Motor neuron (in vitro differentiated cells): ENCODE measurements at regions of chr2 and their contacts with region 1.

Region 1: DNA sequence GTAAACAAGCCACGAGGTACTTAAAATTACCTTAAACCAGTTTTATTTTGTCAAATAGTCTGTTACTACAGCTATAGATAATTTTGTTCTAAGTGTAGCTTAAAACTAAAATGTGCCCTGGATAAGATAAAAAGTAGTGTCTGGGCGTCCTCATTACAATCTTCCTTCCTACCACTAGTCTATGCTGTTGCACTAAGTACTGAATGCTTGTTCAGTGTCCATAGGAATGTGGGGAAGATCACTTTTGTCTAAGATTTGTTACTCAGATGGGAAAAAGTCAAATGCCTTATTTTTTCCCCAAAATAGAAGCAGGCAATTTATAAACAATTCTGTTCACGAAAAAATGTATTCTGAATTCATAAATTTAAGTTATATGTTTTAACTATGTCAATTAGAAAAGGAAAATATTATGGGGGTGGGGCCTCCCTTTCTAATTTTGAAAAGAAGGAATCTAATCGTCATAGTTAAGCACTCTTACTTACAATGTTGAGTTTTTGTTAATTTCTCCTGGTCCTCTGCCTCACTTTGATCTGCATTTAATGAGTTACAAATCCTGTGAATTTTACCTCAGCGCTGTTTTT is 140.4 kb upstream of the VRK2 start:
- ATAC-seq: peak in 7 of 8 experiments; percentile 53 to 97 (median 82)
- H3K4me3 ChIP-seq: no peak overlapping the region
- H3K27ac ChIP-seq: no peak overlapping the region
- H3K4me1 ChIP-seq: no peaks in the 10 kb centered on the region

Region 2: GRCh38 chr2:58448065-58448507 is 541.8 kb after region 1 on chr2:
- in situ Hi-C with region 1: loop called in 2 of 9 experiments (anchors 10 to 25 kb)
- ATAC-seq: peak; percentile 47 to 93 (median 82)
- H3K4me3 ChIP-seq: no peak overlapping the region
- H3K27ac ChIP-seq: no peak overlapping the region
- H3K4me1 ChIP-seq: no peaks in the 10 kb centered on the region

Region 3: DNA sequence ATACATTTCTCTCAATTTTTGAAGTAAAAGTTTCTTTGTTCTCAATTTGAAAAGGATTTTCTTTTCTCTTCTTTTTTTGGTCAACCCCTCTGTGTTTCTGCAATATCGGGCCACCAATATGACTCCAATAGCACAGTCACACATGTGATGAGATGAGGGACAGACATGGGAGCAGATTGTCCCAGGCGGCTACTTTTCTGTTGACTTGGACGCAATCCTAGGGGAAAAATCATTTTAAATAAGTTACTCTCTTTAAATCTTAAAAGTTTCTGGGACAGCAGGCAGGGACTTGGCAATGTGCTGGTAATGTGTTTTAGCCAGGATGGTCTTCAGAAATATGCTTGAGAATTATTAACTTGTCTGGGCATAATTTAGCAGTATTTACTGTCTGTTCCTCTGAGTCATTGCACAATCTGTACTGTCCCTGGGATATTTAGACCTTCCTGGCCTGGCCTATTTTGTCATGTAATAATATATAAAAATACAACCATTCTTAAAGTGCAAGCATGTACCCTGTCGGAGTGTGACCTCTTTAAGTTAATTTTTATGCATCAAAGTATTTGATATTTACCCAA is 723.4 kb after region 1 on chr2:
- in situ Hi-C with region 1: no loop called
- ATAC-seq: no peak
- H3K4me3 ChIP-seq: no peak overlapping the region
- H3K27ac ChIP-seq: no peak overlapping the region
- H3K4me1 ChIP-seq: no peaks in the 10 kb centered on the region